Cardiac septum (tissue), 1 donor: ENCODE measurements at regions of chrX and their contacts with region 1.

Region 1: GRCh38 chrX:136028251-136028984 is 43.2 kb downstream of the SLC9A6 start:
- DNase-seq: no peak

Region 2: GRCh38 chrX:135985141-135985972 is 43.1 kb before region 1 on chrX and contains the start of gene SLC9A6:
- intact Hi-C with region 1: no loop called
- DNase-seq: peak; percentile 87
- total RNA-seq, gene SLC9A6: 12.5 TPM

Region 3: GRCh38 chrX:136125106-136125505 is 96.7 kb after region 1 on chrX:
- intact Hi-C with region 1: loop called (anchors 2 kb)
- DNase-seq: no peak

Region 4: DNA sequence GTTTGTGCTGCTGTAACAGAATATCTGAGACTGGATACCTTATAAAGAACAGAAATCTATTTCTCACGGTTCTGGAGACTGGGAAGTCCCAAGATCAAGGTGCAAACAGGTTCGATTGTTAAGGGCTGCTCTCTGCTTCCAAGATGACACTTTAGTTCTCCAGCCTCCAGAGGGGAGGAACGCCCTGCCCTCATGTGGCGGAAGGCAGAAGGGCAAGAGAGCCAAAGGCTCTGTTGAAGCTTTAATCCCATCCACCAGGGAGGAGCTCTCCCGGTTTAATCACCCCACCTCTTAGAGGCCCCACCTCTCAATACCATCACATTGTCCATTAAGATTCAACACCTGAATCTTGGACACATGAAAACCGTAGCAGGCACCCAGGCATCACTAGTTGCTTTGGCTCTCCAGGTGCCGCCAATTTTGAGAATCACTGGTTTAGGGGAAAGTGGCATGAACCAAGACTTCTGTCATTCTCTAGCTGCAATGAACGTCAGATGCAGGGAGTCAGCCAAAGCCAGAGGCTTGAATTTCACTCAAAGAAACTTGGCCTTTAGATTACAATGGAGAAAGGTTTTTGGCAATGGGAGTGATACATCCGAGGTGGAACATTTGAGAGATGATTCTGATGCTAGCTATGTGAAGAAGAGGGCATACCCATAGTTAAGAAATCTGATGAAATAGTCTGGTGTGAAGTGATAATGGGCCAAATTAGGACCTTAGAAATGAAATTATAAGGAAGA is 134.6 kb after region 1 on chrX:
- intact Hi-C with region 1: loop called (anchors 2 kb)
- DNase-seq: no peak

Region 5: GRCh38 chrX:136209016-136209738 is 180.8 kb after region 1 on chrX:
- intact Hi-C with region 1: no loop called
- DNase-seq: no peak

Region 6: DNA sequence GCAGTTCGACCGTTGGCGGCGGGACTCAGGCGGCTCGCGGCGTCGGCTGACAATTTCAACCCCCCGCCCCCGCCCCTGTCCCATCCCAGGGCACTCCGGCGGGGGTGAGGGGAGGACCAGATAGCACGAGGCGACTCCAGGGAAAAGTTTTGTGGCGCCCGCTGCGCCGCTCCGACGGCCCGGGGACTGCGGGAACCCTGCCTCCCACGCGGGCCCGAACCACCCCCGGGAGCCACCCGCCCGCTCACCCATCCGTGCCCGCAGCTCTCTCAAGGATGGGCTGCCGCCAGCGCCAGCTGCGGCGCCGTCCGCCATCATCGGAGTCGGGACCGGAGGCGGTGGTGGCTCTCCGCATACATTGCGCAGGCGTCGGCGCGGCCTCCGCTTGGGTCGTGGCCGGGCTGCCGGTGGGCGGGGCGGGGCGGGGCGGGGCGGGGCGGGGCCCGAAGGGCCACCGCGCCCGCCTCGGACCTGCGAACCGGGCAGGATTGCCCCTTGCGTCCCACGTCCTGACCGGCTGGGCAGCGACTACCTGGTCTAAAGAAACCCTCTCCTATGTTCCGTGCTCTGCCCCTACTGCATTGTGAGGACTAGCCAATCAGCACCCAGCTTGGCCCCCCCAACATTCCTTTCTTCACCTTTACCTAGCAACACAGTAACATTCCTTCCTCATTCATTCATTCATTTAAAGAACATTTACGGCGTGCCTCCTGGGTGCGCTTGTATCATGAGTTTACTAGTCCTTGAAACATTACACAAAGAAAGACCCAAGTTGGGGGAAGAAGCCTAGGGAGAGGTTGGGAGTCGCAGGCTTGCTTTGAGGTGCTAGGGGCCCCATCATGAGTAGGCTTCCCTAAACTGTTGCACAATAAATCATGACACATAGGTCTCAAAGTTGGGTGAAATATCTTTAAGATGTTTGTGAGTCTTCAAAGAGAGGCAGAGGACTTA is 222.9 kb after region 1 on chrX and contains the start of gene MAP7D3:
- intact Hi-C with region 1: loop called (anchors 5 kb)
- DNase-seq: peak; percentile 87
- total RNA-seq, gene MAP7D3: 15.6 TPM

Region 7: GRCh38 chrX:136268051-136269048 is 239.9 kb after region 1 on chrX:
- intact Hi-C with region 1: loop called (anchors 2 kb)
- DNase-seq: no peak

Region 8: DNA sequence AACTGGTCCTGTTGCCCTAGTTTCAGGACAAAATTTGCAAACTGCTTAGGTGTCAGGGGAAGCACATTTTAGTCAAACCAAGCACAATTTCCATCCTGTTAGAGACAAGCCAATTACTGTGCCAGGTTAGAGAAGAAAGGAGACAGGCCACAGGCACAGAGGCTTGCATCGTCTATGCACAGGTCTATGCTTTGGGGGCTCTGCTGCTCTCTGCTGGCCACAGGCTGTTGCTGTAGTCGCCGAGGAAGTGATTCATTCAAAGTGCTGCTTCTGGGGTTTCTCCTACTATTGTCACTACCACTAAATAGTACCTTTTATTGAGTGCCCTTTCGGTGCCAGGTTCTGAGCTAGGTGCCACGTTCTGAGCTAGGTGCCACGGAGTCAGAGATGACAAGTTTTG is 549.1 kb after region 1 on chrX:
- intact Hi-C with region 1: loop called (anchors 5 kb)
- DNase-seq: no peak